Left cardiac atrium (tissue), 4 donors: ENCODE measurements at regions of chr21 and their contacts with region 1.

Region 1: DNA sequence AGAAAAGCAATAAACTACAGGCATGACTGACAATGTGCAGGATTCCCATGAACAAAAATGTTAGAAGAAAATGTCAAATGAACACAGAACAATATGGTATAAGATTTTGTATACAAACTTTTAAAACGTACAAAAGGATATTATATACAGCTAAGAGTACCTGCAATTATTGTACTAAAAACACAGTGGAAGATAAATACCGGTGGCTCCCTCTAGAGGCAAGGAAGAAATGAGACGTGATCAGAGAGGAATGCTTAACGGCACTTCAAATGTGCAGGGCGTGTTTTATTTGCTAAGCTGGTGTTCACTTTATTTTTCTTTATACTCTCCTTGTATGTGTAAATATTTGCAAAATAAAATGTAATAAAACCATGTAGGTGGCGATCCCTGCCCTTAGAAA is 191.8 kb upstream of the SAMSN1 start:
- DNase-seq: no peak
- ATAC-seq: peak in 1 of 2 donors; percentile 44

Region 2: GRCh38 chr21:14403681-14404318 is 334.1 kb before region 1 on chr21:
- intact Hi-C with region 1: loop called in 1 of 2 experiments (anchors 10 kb)
- DNase-seq: no peak
- ATAC-seq: peak in 1 of 2 donors; percentile 47

Region 3: DNA sequence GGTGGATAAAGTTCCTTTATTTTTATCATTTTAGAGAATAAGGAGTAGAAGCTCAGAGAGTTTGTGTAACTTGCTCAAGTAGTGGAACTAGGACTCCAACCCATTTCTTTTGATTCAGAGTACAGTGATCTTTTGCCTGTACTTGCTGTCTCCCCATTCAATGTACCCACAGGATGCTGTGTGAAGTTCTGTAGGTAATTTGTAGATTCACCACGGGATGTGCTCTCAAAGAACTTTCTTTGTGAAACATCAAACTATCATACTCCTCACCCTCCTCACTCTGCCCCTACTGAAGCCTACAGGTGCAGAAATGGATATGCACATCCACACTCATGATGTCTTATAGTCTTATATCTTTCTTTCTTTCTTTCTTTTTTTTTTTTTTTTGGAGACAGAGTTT is 289.1 kb before region 1 on chr21:
- intact Hi-C with region 1: loop called in 1 of 2 experiments (anchors 10 kb)
- DNase-seq: no peak
- ATAC-seq: no peak